ENCODE measurements at regions of chr4 and their contacts with region 1.

Region 1: DNA sequence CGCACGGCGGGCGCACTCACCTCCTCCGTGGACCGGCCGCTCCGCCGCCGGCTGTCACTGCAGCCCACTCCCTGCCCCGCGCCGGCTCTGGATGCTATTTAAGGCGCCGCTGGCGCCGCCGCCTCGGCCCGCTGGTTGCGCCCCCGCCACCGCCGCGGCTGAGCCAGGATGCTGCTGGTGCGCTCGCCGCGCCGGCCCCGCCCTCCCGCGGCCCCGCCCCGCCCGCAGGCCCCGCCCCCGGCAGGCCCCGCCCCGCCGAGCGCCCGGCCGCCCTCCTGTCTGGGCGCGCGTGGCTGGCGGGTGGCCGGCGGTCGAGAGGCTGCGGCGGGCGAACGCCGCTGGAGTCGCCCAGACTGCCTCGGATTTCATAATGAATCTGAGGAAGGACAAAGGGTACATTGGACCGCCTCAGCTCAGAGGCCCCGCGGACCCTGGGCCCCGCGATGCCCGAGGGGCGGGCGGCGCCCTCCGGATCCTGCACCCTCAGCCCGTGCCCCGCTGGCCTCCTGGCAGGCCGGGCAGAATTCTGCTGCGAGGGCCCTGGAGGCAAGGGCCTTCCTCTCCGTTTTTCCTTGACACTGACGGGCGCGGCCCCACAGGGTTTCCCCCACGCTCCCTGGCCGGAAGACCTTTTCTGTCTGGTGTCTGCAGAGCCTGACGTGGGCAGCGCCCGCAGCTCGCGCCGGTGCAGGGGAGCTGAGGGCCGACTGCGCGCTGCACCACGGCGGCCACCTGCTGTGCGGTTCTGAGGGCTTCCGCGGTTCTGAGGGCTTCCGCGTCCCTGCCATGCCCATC is at the start of gene ACSL1:
- DNase-seq: peak; percentile 73 to 98 (median 84)

Region 2: DNA sequence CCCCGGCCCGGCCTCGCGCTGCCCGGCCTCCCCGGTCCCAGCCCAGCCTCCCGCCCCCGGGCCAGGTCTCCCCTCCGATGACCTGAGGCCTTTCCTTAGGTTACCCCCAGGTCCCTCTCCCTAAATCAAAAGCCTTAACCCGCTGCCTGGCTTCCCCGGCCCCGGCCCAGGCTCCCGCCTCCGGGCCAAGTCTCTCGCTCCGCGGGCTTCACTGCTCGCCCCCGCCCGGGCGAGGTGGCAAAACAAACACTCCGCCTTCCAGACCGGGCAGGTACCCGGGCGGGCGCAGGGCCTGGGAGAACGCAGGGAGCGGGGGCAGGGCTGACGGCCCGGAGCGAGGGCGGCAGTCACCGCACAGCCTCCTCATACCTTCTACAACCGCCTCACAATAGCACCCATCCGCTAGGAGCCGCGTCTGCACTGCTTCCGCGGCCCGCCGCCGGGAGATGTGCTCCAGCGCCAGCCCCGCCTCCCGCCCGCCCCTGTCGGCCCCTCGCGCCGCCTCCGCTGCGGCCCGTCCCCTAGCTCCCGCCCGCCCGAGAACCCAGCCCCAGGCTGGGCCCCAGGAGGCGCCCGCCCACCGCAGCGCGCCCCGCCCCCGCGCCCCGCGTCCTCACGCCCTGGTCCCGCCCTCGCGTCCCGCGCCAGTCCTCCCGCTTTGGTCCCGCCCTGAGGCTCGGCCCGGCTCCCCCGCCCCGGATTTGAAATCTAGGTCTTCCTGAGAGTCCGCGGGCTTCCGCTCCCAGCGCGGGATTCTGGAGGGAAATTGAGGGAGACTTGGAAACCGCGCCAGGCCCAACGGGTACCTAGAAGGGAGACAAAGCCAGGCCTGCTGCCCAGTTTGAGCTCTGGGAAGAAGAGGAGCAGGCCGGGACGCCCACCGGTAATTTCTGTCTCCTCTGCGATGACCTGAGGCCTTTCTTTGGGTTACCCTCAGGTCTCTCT is 176.8 kb before region 1 on chr4 and contains the starts of genes CASP3 and PRIMPOL:
- intact Hi-C with region 1: loop called (anchors 1 kb)
- DNase-seq: peak; percentile 94 to 99 (median 96)

Region 3: GRCh38 chr4:184733654-184734524 is 92.2 kb before region 1 on chr4 and contains the start of gene CENPU:
- intact Hi-C with region 1: loop called (anchors 1 kb)
- DNase-seq: peak; percentile 91 to 99 (median 96)

Region 4: GRCh38 chr4:184762100-184762499 is 64.0 kb before region 1 on chr4:
- intact Hi-C with region 1: no loop called
- DNase-seq: no peak